Panc1 (cell line): ENCODE measurements at regions of chr6 and their contacts with region 1.

Region 1: GRCh38 chr6:31332637-31333602 is 24.1 kb downstream of the HLA-B start:
- DNase-seq: no peak
- ATAC-seq: no peak
- H3K4me3 ChIP-seq: no peak overlapping the region
- H3K27ac ChIP-seq: no peak overlapping the region
- H3K4me1 ChIP-seq: no peaks in the 10 kb centered on the region
- H3K27me3 ChIP-seq: no peaks in the 10 kb centered on the region
- CTCF ChIP-seq: no peak

Region 2: DNA sequence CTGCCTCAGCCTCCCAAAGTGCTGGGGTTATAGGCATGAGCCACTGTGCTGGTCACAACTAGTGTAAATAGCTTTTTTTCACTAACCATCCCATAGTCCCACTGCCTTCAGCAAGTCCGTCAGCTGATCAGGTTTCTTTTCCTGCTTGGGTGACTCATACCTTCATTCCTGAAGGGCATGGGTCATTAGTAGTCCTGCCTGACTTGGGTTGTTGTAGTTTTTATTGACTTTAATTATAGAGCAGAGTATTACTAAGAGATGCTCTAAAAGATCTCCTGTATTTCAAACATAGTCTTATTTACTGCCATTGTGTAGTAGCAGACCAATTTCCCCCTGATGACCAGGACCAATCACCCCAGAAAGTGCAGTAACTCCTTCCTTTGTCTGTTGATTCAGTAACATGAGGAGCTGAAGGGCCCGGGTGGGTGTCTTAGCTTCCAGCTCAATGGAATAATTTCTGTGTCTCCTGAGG is 86.8 kb before region 1 on chr6:
- CTCF ChIA-PET with region 1: no interaction called
- POLR2A ChIA-PET with region 1: no interaction called
- in situ Hi-C with region 1: loop called (anchors 25 kb)
- intact Hi-C with region 1: no loop called
- DNase-seq: peak; percentile 67
- ATAC-seq: peak; percentile 96
- H3K4me3 ChIP-seq: no peak overlapping the region
- H3K27ac ChIP-seq: no peak overlapping the region
- H3K4me1 ChIP-seq: peaks cover 3% of the 10 kb centered on the region; the same call in 1 of the 2 replicates
- H3K27me3 ChIP-seq: peaks cover 8% of the 10 kb centered on the region
- CTCF ChIP-seq: no peak